ENCODE measurements at regions of chr1 and their contacts with region 1.

Region 1: GRCh38 chr1:24150234-24151174 is 7.6 kb upstream of the IL22RA1 start:
- DNase-seq: peak; percentile 93
- H3K4me3 Mint-ChIP-seq: peak overlapping the region; percentile 63
- H3K27ac Mint-ChIP-seq: no peak overlapping the region
- H3K4me1 Mint-ChIP-seq: peaks cover 17% of the 10 kb centered on the region
- H3K27me3 Mint-ChIP-seq: peaks cover 16% of the 10 kb centered on the region

Region 2: DNA sequence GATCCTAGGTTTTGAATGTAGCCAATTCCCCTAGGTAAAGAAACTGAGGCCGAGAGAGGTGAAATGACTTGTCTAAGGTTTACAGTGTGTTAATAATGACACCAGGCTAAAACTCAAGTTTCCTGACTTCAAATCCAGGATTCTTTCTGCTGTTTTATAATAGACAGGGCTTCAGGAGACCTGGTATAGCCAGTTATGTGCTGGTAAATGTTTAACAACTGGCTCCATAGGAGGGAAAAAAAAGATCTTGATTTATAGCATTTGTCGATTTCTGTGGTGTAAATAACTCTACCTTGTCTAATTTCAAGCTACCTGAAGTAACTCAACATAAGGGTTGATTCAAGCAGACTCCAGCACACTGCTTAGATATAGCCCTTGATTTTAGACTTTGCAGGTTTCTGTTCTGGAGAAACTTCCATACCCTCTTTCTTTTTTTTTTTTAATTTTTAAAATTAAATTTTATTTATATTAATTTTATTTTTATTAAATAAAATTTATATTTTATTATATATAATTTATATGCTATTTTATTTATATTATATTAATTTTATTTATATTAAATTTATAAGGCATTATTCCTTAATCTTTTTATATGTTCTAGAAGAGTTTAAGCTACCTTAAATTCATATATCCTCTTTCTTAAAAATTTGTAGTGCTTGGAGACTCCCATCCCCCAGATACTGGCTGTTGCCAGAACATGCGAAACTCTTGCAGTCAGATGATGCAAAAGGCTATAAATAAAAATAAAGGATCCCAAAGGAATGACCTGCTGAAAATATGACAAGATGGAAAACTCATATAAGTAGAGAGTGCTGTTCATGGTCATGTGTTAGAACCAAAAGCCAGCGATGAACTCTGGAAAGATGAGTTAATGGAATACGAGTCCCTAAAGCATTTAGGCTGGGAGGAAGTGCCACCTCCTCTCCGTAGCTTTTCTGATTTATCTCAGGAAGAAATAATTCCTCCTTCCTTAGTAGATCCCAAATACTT is 135.0 kb before region 1 on chr1:
- CTCF ChIA-PET with region 1: no interaction called
- POLR2A ChIA-PET with region 1: no interaction called
- intact Hi-C with region 1: no loop called
- DNase-seq: no peak
- H3K4me3 Mint-ChIP-seq: no peak overlapping the region
- H3K27ac Mint-ChIP-seq: no peak overlapping the region
- H3K4me1 Mint-ChIP-seq: no peaks in the 10 kb centered on the region
- H3K27me3 Mint-ChIP-seq: peaks cover 3% of the 10 kb centered on the region

Region 3: GRCh38 chr1:24070821-24071393 is 79.6 kb before region 1 on chr1:
- CTCF ChIA-PET with region 1: interaction called, 10 read pairs
- POLR2A ChIA-PET with region 1: no interaction called
- intact Hi-C with region 1: no loop called
- DNase-seq: peak; percentile 83
- H3K4me3 Mint-ChIP-seq: no peak overlapping the region
- H3K27ac Mint-ChIP-seq: no peak overlapping the region
- H3K4me1 Mint-ChIP-seq: peaks cover 2% of the 10 kb centered on the region
- H3K27me3 Mint-ChIP-seq: peaks cover 10% of the 10 kb centered on the region

Region 4: GRCh38 chr1:24094554-24094953 is 56.0 kb before region 1 on chr1:
- CTCF ChIA-PET with region 1: no interaction called
- POLR2A ChIA-PET with region 1: no interaction called
- intact Hi-C with region 1: no loop called
- DNase-seq: no peak
- H3K4me3 Mint-ChIP-seq: no peak overlapping the region
- H3K27ac Mint-ChIP-seq: no peak overlapping the region
- H3K4me1 Mint-ChIP-seq: no peaks in the 10 kb centered on the region
- H3K27me3 Mint-ChIP-seq: no peaks in the 10 kb centered on the region

Region 5: DNA sequence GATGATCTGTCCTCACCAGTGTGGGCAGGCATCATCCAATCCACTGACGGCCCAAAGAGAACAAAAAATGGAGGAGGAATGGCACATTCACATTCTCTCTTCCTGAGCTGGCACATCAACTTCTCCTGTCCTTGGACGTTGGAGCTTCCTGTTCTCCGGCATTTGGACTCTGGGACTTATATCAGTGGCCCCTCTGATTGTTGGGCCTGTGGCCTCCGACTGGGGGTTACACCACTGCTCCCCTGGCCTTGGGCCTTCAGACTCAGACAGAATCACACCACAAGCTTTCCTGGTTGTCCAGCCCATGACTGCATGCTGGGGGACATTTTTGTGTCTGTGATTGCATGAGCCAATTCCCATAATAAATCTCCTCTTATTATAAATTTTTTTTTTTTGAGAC is 16.5 kb after region 1 on chr1:
- CTCF ChIA-PET with region 1: interaction called, 12 read pairs
- POLR2A ChIA-PET with region 1: no interaction called
- intact Hi-C with region 1: no loop called
- DNase-seq: no peak
- H3K4me3 Mint-ChIP-seq: no peak overlapping the region
- H3K27ac Mint-ChIP-seq: no peak overlapping the region
- H3K4me1 Mint-ChIP-seq: no peaks in the 10 kb centered on the region
- H3K27me3 Mint-ChIP-seq: no peaks in the 10 kb centered on the region

Region 6: GRCh38 chr1:24186993-24187805 is 36.7 kb after region 1 on chr1 and contains the start of gene IFNLR1:
- CTCF ChIA-PET with region 1: interaction called, 30 read pairs
- POLR2A ChIA-PET with region 1: interaction called, 6 read pairs
- intact Hi-C with region 1: loop called (anchors 1 kb)
- DNase-seq: peak; percentile 91
- H3K4me3 Mint-ChIP-seq: peak within 1 kb of the TSS; percentile 80
- H3K27ac Mint-ChIP-seq: peak within 1 kb of the TSS; percentile 54
- H3K4me1 Mint-ChIP-seq: peaks cover 48% of the 10 kb centered on the region
- H3K27me3 Mint-ChIP-seq: peaks cover 2% of the 10 kb centered on the region
- total RNA-seq, gene IFNLR1: 6.2 to 10.0 TPM

Region 7: DNA sequence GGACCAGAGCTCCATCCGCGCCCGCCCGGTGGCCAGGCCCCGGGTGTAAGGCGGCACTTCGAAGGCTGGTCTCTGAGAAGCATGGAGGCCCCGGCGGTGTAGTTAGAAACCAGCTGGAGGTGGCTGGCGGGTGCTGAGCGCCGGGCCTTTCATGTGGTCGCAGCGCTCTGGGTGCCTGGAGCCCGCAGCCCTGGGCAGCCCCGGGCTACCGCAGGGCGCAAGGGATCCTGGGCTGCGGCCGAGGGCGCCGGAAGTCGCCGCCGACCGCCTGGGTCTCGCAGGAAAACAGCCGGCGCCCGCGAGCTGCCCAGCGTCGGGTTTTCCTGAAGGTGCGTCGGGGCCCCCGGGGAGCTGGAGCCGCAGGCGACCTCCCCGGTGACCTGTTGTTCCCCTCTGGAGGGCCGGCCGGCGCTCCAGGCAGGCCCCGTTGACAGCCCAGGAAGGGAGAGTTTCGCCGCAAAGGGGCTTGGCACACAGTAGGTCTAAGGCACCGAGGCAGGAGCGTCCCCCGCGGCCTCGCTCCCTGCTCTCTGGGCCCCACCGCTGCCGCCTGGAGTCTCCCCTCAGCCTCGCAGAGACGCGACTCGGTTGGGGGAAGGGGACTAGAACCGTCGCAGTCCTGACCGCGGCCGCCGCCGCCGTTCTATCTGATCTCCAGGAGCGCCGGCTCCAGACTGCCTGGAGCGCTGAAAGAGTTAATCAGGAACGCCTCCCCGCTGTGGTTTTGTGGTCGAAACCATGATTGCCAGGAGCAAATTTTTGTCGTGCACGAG is 171.4 kb after region 1 on chr1:
- CTCF ChIA-PET with region 1: interaction called, 10 read pairs
- POLR2A ChIA-PET with region 1: no interaction called
- intact Hi-C with region 1: loop called (anchors 2 kb)
- DNase-seq: peak; percentile 86
- H3K4me3 Mint-ChIP-seq: peak overlapping the region; percentile 71
- H3K27ac Mint-ChIP-seq: no peak overlapping the region
- H3K4me1 Mint-ChIP-seq: peaks cover 37% of the 10 kb centered on the region
- H3K27me3 Mint-ChIP-seq: peaks cover 69% of the 10 kb centered on the region

Region 8: DNA sequence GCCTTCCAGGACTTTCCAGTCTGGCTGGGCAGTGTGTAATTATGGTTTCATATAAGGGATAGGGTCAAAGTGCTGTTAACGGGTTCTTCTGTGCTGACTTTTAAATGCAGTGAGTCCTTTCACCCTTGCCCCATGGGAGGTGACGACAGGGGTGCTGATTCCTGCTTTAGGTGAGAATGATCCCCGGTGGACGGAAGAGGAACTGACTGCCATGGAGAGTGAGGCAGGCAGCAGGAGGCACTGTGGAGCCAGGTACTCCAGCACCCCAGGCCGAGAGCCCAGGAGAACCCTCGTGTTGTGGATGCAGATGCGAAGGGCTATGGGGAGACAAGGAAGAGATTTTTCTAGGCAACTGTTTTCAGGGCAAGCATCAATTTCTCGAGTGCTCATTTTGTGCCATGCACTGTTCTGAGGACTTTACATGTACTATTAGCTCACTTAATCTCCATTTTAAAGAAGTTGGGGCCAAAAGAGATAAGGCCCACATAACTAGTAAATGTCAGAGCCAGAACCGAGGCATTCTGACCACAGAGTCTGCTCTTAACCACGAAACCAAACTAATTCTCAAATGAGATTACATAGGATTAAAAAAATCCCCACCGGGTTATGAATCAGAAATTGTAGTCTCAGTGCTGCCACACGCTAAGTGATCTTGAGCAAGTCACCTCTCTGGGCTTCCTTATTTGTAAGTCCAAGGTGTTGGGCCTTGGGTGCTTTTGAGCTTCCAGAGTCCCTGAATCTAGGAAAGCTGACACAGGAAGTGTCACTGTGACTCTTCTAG is 234.8 kb after region 1 on chr1:
- CTCF ChIA-PET with region 1: interaction called, 77 read pairs
- POLR2A ChIA-PET with region 1: no interaction called
- intact Hi-C with region 1: no loop called
- DNase-seq: peak; percentile 64
- H3K4me3 Mint-ChIP-seq: no peak overlapping the region
- H3K27ac Mint-ChIP-seq: peak overlapping the region; percentile 7
- H3K4me1 Mint-ChIP-seq: peaks cover 26% of the 10 kb centered on the region
- H3K27me3 Mint-ChIP-seq: no peaks in the 10 kb centered on the region